ENCODE measurements at regions of chr13 and their contacts with region 1.

Region 1: GRCh38 chr13:20495082-20496023 is 30.3 kb downstream of the CRYL1 start:
- DNase-seq: peak in 1 of 2 experiments; percentile 68
- H3K4me3 ChIP-seq: no peak overlapping the region
- H3K27ac ChIP-seq: no peak overlapping the region
- H3K4me1 ChIP-seq: no peaks in the 10 kb centered on the region; a peak in 1 of 7 replicates
- H3K27me3 ChIP-seq: no peaks in the 10 kb centered on the region
- CTCF ChIP-seq: peak in 2 of 3 experiments; percentile 70 to 88; a peak in 3 of 4 replicates
- EP300 ChIP-seq: no peak
- POLR2A ChIP-seq: no peak
- RAD21 ChIP-seq: peak; percentile 92 to 95

Region 2: GRCh38 chr13:20197361-20197834 is 298.0 kb before region 1 on chr13:
- CTCF ChIA-PET with region 1: interaction called, 23 read pairs
- POLR2A ChIA-PET with region 1: no interaction called
- DNase-seq: no peak
- H3K4me3 ChIP-seq: no peak overlapping the region
- H3K27ac ChIP-seq: no peak overlapping the region
- H3K4me1 ChIP-seq: peaks cover 0 to 9% (median 3%) of the 10 kb centered on the region in 4 experiments; a peak in 5 of 7 replicates
- H3K27me3 ChIP-seq: peaks cover 28 to 49% (median 45%) of the 10 kb centered on the region in 4 experiments
- CTCF ChIP-seq: peak; percentile 37 to 58 (median 53)
- EP300 ChIP-seq: no peak
- POLR2A ChIP-seq: no peak
- RAD21 ChIP-seq: peak; percentile 74 to 77

Region 3: DNA sequence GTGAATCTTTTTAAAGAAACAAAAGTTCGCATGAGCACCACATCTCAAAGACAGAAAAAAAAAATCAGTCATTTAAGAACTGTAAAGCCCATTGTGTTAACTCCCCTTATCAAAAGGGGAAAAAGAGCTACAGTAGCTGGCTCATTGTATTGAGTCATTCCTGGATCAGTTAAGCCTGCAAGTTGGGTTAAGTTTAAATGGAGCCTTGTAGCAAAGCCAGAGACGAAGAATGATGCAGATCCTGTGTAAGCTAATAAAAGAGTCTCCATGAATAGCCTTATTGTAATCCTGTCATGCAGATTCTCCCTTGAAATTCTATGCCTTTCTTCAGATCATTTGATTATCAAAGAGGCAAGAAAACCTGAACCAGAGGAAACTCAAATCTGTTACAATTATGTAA is 53.5 kb before region 1 on chr13:
- CTCF ChIA-PET with region 1: no interaction called
- POLR2A ChIA-PET with region 1: no interaction called
- DNase-seq: no peak
- H3K4me3 ChIP-seq: no peak overlapping the region
- H3K27ac ChIP-seq: no peak overlapping the region
- H3K4me1 ChIP-seq: peaks cover 0 to 10% (median 2%) of the 10 kb centered on the region in 4 experiments; a peak in 3 of 7 replicates
- H3K27me3 ChIP-seq: no peaks in the 10 kb centered on the region
- CTCF ChIP-seq: no peak
- EP300 ChIP-seq: no peak
- POLR2A ChIP-seq: no peak
- RAD21 ChIP-seq: no peak

Region 4: GRCh38 chr13:20470136-20470535 is 25.2 kb before region 1 on chr13:
- CTCF ChIA-PET with region 1: interaction called, 10 read pairs
- POLR2A ChIA-PET with region 1: no interaction called
- DNase-seq: no peak
- H3K4me3 ChIP-seq: no peak overlapping the region
- H3K27ac ChIP-seq: no peak overlapping the region
- H3K4me1 ChIP-seq: no peaks in the 10 kb centered on the region
- H3K27me3 ChIP-seq: no peaks in the 10 kb centered on the region
- CTCF ChIP-seq: no peak
- EP300 ChIP-seq: no peak
- POLR2A ChIP-seq: no peak
- RAD21 ChIP-seq: no peak

Region 5: DNA sequence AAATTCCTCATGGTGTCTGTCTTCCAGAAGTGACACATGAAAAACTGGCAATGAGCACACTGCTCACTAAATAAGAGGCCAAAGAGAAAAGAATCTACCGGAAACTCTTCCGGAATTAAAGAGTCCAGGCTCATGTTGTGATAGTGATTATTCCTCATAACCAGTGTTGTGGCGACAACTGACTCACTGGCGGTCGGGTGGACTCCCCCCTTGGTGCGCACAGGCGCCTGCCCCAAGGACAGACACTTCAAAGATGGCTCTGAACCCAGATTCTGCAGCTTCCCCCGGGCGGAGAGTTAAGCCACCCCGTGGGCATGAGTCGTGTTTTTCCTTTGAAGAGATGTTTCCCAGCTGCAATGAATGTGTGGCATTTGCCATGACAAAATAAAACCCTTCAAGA is 218.4 kb after region 1 on chr13:
- CTCF ChIA-PET with region 1: interaction called, 11 read pairs
- POLR2A ChIA-PET with region 1: no interaction called
- DNase-seq: no peak
- H3K4me3 ChIP-seq: no peak overlapping the region
- H3K27ac ChIP-seq: no peak overlapping the region
- H3K4me1 ChIP-seq: peaks cover 2 to 9% (median 6%) of the 10 kb centered on the region in 4 experiments; a peak in 4 of 7 replicates
- H3K27me3 ChIP-seq: no peaks in the 10 kb centered on the region
- CTCF ChIP-seq: no peak
- EP300 ChIP-seq: no peak
- POLR2A ChIP-seq: no peak
- RAD21 ChIP-seq: no peak

Region 6: GRCh38 chr13:20828539-20829364 is 333.4 kb after region 1 on chr13:
- CTCF ChIA-PET with region 1: interaction called, 54 read pairs
- POLR2A ChIA-PET with region 1: no interaction called
- DNase-seq: no peak
- H3K4me3 ChIP-seq: no peak overlapping the region
- H3K27ac ChIP-seq: no peak overlapping the region
- H3K4me1 ChIP-seq: peaks cover 0 to 2% (median under 1%) of the 10 kb centered on the region in 4 experiments; a peak in 2 of 7 replicates
- H3K27me3 ChIP-seq: no peaks in the 10 kb centered on the region
- CTCF ChIP-seq: peak in 2 of 3 experiments; percentile 50 to 62; a peak in 3 of 4 replicates
- EP300 ChIP-seq: no peak
- POLR2A ChIP-seq: no peak
- RAD21 ChIP-seq: peak; percentile 53 to 60

Region 7: GRCh38 chr13:20843166-20843565 is 347.8 kb after region 1 on chr13:
- CTCF ChIA-PET with region 1: no interaction called
- POLR2A ChIA-PET with region 1: no interaction called
- DNase-seq: no peak
- H3K4me3 ChIP-seq: no peak overlapping the region
- H3K27ac ChIP-seq: no peak overlapping the region
- H3K4me1 ChIP-seq: no peaks in the 10 kb centered on the region
- H3K27me3 ChIP-seq: no peaks in the 10 kb centered on the region
- CTCF ChIP-seq: no peak
- EP300 ChIP-seq: no peak
- POLR2A ChIP-seq: no peak
- RAD21 ChIP-seq: no peak

Region 8: GRCh38 chr13:20924758-20925394 is 429.5 kb after region 1 on chr13:
- CTCF ChIA-PET with region 1: interaction called, 18 read pairs
- POLR2A ChIA-PET with region 1: interaction called, 4 read pairs
- DNase-seq: peak in 1 of 2 experiments; percentile 88
- H3K4me3 ChIP-seq: no peak overlapping the region
- H3K27ac ChIP-seq: no peak overlapping the region
- H3K4me1 ChIP-seq: peaks cover 0 to 4% (median under 1%) of the 10 kb centered on the region in 4 experiments; a peak in 1 of 7 replicates
- H3K27me3 ChIP-seq: no peaks in the 10 kb centered on the region
- CTCF ChIP-seq: peak in 2 of 3 experiments; percentile 69 to 77; a peak in 3 of 4 replicates
- EP300 ChIP-seq: no peak
- POLR2A ChIP-seq: no peak
- RAD21 ChIP-seq: peak; percentile 92

Measured in H1 (cell line).